Cardiac septum (tissue), 1 donor: ENCODE measurements at regions of chr2 and their contacts with region 1.

Region 1: GRCh38 chr2:197515739-197516392 is at the start of gene MOB4:
- DNase-seq: peak; percentile 98
- total RNA-seq, gene MOB4: 27.3 TPM

Region 2: DNA sequence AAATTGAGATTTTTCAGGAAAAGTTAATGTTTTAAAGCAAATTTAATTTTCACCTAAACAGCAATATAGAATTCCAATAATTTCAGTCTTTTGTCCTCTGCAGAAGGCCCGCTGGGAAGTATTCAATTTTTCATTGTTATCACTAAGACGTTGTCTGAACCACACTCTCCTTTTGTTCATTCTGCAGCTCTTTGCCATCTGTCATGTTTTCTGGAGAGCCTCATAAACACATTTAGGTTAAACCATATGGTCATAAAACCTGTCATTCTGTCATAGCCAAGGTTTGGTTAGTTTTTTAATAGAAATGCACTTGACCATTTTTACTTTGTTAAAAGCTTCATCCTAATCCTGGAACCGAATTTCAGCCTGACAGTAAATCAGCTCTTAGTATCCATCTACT is 535.4 kb before region 1 on chr2:
- intact Hi-C with region 1: no loop called
- DNase-seq: no peak

Region 3: DNA sequence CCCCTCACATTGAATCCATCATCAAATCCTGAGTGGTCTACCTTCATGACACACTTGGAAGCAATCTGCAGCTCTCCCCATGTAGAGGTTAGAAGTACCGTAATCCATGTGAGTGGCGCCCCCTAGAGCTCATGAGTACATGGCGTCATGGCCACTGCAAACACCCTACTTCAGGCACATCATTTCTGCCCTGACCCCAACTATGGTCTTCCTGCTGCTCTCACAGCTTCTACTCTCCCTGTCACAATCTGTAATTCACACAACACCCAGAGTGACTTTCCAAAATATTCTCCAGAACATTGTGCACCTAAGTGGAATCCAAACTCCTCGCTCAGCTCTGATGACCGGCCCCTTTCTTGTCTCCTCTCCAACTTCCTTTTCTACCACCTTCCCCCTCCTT is 347.2 kb before region 1 on chr2:
- intact Hi-C with region 1: no loop called
- DNase-seq: no peak

Region 4: GRCh38 chr2:197294260-197294659 is 221.6 kb before region 1 on chr2:
- intact Hi-C with region 1: no loop called
- DNase-seq: no peak

Region 5: GRCh38 chr2:197453161-197453914 is 62.5 kb before region 1 on chr2 and contains the start of gene COQ10B:
- intact Hi-C with region 1: loop called (anchors 1 kb)
- DNase-seq: peak; percentile 100
- total RNA-seq, gene COQ10B: 38.5 TPM

Region 6: DNA sequence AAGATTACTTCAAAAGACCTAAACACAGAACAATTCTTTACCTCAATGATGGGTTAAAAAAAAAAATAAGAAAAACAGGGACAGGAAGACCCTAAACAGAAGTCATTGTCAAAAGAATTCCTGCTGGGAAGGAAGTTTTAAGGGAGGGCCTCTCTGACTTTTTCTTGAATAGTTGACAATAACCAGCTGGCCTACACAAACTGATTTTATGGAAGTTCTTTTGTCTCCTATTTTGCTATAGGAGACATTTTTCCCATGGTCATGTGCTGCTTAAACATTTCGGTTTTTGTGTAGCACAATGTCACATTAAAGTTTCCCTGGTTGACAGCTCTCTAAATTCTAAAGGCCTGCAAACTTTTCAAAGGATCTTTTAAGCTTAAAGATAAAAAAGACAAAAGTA is 104.3 kb after region 1 on chr2:
- intact Hi-C with region 1: loop called (anchors 5 kb)
- DNase-seq: no peak